ENCODE measurements at regions of chr1 and their contacts with region 1.

Region 1: GRCh38 chr1:151945725-151946364 is 36.5 kb upstream of the THEM4 start:
- DNase-seq: peak; percentile 100
- ATAC-seq: peak; percentile 76
- H3K4me3 ChIP-seq: peak overlapping the region; percentile 56
- H3K27ac ChIP-seq: peak overlapping the region; percentile 96
- H3K4me1 ChIP-seq: peaks cover 51% of the 10 kb centered on the region
- H3K27me3 ChIP-seq: no peaks in the 10 kb centered on the region
- CTCF ChIP-seq: no peak

Region 2: DNA sequence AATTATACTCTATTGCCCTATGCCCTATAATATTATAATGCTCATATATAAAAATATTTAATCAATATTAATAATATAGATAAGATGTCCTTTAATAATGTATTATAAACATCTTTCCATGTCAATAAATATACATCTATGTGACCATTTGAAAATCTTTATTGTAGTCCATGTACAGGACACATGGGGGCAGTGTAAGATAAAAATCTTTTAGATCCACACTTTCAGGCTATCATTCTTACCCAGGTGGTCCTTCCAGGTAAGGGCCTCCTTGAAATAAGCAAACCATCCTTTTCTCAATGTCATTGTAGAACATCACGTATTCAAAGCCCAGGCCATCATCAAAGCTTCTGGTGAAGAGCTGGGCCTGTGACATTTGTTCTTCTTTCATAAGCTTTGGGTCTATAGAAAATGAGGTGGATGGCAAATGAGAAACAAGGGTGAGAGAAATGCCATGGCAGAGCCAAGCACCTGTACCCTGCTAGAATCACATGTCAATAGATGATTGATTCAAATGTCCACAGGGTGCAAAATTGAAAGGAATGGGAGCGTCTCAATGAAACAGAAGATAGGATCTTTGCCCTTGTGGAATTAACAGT is 56.8 kb before region 1 on chr1:
- CTCF ChIA-PET with region 1: no interaction called
- POLR2A ChIA-PET with region 1: no interaction called
- intact Hi-C with region 1: loop called (anchors 5 kb)
- DNase-seq: peak; percentile 62
- ATAC-seq: peak; percentile 36; the same call in 1 of the 2 replicates
- H3K4me3 ChIP-seq: no peak overlapping the region
- H3K27ac ChIP-seq: no peak overlapping the region
- H3K4me1 ChIP-seq: peaks cover 26% of the 10 kb centered on the region
- H3K27me3 ChIP-seq: no peaks in the 10 kb centered on the region
- CTCF ChIP-seq: peak; percentile 73

Measured in PC-3 (cell line).